B cell (primary cell): ENCODE measurements at regions of chr1 and their contacts with region 1.

Region 1: GRCh38 chr1:108746372-108747205 is at the start of gene STXBP3:
- DNase-seq: peak; percentile 99
- ATAC-seq: peak; percentile 93
- H3K4me3 ChIP-seq: peak within 1 kb of the TSS; percentile 41 to 99 (median 94)
- H3K4me3 Mint-ChIP-seq: peak within 1 kb of the TSS; percentile 98
- H3K27ac ChIP-seq: peak within 1 kb of the TSS; percentile 92 to 94
- H3K27ac Mint-ChIP-seq: peak within 1 kb of the TSS; percentile 100
- H3K4me1 ChIP-seq: peaks cover 4 to 5% of the 10 kb centered on the region in 2 donors
- H3K4me1 Mint-ChIP-seq: peaks cover 33% of the 10 kb centered on the region
- H3K27me3 ChIP-seq: no peaks in the 10 kb centered on the region
- H3K27me3 Mint-ChIP-seq: no peaks in the 10 kb centered on the region
- CTCF ChIP-seq: peak; percentile 94
- total RNA-seq, gene STXBP3: 77.5 and 78.1 TPM in 2 replicates

Region 2: DNA sequence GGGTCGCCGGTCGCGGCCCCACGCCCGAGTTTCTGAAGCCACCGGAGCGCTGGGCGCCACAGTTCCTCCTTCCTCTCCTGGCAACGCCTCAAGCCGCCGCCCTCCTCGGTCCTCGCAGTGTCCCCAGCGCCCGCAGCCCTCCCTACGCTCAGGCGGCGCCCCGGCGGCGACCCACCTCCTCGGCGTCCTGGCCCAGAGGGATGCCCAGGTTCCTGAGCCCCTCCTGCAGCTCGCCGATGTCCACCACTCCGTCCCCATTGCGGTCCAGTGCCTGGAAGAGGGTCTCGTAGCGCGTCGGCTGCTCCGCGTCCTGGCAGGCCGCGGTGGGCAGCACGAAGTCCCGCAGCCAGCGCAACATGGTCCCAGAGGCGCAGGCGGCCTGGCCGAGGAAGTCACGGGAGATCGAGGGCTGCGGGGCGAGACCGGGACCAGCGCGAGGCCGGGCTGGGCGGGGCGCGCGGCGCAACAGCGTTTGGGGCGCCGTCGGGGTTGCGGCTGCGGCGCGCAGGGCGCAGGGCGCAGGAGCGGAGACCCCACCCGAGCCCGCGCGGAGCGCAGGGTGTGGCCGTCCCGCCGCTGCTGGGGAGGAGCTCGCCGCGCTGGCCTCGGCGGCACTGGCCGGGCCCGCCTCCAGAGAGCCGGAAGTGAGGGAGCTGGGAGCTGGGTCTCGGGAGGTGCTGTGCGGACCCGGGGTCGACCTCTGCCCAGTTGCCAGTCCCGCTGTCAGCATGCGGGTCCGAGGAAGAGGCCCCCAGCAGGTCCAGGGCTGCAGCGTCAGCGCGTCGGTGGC is 546.6 kb before region 1 on chr1 and contains the start of gene SLC25A24:
- CTCF ChIA-PET with region 1: no interaction called
- POLR2A ChIA-PET with region 1: no interaction called
- intact Hi-C with region 1: loop called (anchors 5 kb)
- DNase-seq: peak; percentile 85
- ATAC-seq: peak; percentile 95
- H3K4me3 ChIP-seq: peak within 1 kb of the TSS; percentile 85 to 96 (median 87)
- H3K4me3 Mint-ChIP-seq: peak within 1 kb of the TSS; percentile 93
- H3K27ac ChIP-seq: peak within 1 kb of the TSS; percentile 80 to 84
- H3K27ac Mint-ChIP-seq: peak within 1 kb of the TSS; percentile 94
- H3K4me1 ChIP-seq: peaks cover 13 to 16% of the 10 kb centered on the region in 2 donors
- H3K4me1 Mint-ChIP-seq: peaks cover 32% of the 10 kb centered on the region
- H3K27me3 ChIP-seq: no peaks in the 10 kb centered on the region
- H3K27me3 Mint-ChIP-seq: no peaks in the 10 kb centered on the region
- CTCF ChIP-seq: no peak
- total RNA-seq, gene SLC25A24: 25.3 and 25.6 TPM in 2 replicates

Region 3: GRCh38 chr1:108661030-108661620 is 85.5 kb before region 1 on chr1 and contains the start of gene HENMT1:
- CTCF ChIA-PET with region 1: no interaction called
- POLR2A ChIA-PET with region 1: no interaction called
- intact Hi-C with region 1: loop called (anchors 1 kb)
- DNase-seq: peak; percentile 94
- ATAC-seq: peak; percentile 84
- H3K4me3 ChIP-seq: peak within 1 kb of the TSS; percentile 2 to 69 (median 59)
- H3K4me3 Mint-ChIP-seq: peak within 1 kb of the TSS; percentile 88
- H3K27ac ChIP-seq: peak within 1 kb of the TSS; percentile 94 to 95
- H3K27ac Mint-ChIP-seq: peak within 1 kb of the TSS; percentile 96
- H3K4me1 ChIP-seq: peaks cover 8 to 10% of the 10 kb centered on the region in 2 donors
- H3K4me1 Mint-ChIP-seq: peaks cover 12% of the 10 kb centered on the region
- H3K27me3 ChIP-seq: no peaks in the 10 kb centered on the region
- H3K27me3 Mint-ChIP-seq: no peaks in the 10 kb centered on the region
- CTCF ChIP-seq: no peak
- total RNA-seq, gene HENMT1: 6.2 and 6.4 TPM in 2 replicates

Region 4: GRCh38 chr1:108877348-108878159 is 131.0 kb after region 1 on chr1:
- CTCF ChIA-PET with region 1: no interaction called
- POLR2A ChIA-PET with region 1: no interaction called
- intact Hi-C with region 1: loop called (anchors 1 kb)
- DNase-seq: peak; percentile 34
- ATAC-seq: no peak
- H3K4me3 ChIP-seq: peak overlapping the region; percentile 68 to 93 (median 86)
- H3K4me3 Mint-ChIP-seq: peak overlapping the region; percentile 98
- H3K27ac ChIP-seq: peak overlapping the region in 1 of 2 donors; percentile 67
- H3K27ac Mint-ChIP-seq: peak overlapping the region; percentile 88
- H3K4me1 ChIP-seq: peaks cover 11 to 12% of the 10 kb centered on the region in 2 donors
- H3K4me1 Mint-ChIP-seq: peaks cover 13% of the 10 kb centered on the region
- H3K27me3 ChIP-seq: no peaks in the 10 kb centered on the region
- H3K27me3 Mint-ChIP-seq: no peaks in the 10 kb centered on the region
- CTCF ChIP-seq: no peak

Region 5: DNA sequence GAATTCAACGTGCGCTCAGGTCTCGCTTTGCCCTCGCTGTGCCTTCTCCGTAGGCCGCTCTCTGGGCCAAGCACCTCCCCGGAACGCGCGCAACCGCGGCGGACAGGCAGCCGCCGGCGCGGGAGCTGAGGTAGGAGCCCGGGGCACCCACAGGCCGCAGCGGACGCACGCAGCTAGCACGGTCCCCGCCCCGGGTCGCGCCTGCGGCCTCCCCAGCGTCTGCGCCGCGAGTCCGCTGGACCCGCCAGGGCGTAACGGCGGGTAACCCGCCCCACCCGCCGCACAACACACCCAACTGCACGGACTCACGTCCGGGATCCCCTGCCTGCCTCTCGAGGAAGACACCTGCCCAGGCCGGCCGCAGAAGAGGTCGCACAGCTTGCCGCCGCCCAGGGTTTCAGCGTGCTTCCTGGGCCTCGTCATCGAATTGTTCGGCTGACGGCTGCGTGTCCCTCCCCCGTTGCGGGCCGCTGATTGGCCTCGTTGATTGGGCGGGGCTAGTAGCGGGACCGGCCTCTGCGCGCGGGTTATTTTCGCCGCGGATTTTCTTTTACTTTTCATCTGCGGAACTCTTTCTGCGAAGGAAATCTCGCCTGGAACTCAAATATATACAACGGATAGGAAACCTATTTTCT is 216.6 kb after region 1 on chr1 and contains the start of gene CLCC1:
- CTCF ChIA-PET with region 1: no interaction called
- POLR2A ChIA-PET with region 1: no interaction called
- intact Hi-C with region 1: loop called (anchors 5 kb)
- DNase-seq: peak; percentile 97
- ATAC-seq: peak; percentile 91
- H3K4me3 ChIP-seq: peak within 1 kb of the TSS; percentile 56 to 94 (median 76)
- H3K4me3 Mint-ChIP-seq: peak within 1 kb of the TSS; percentile 91
- H3K27ac ChIP-seq: peak within 1 kb of the TSS; percentile 86 to 94
- H3K27ac Mint-ChIP-seq: peak within 1 kb of the TSS; percentile 95
- H3K4me1 ChIP-seq: peaks cover 16 to 17% of the 10 kb centered on the region in 2 donors
- H3K4me1 Mint-ChIP-seq: peaks cover 30% of the 10 kb centered on the region
- H3K27me3 ChIP-seq: no peaks in the 10 kb centered on the region
- H3K27me3 Mint-ChIP-seq: no peaks in the 10 kb centered on the region
- CTCF ChIP-seq: no peak
- total RNA-seq, gene CLCC1: 26.9 and 29.5 TPM in 2 replicates

Region 6: DNA sequence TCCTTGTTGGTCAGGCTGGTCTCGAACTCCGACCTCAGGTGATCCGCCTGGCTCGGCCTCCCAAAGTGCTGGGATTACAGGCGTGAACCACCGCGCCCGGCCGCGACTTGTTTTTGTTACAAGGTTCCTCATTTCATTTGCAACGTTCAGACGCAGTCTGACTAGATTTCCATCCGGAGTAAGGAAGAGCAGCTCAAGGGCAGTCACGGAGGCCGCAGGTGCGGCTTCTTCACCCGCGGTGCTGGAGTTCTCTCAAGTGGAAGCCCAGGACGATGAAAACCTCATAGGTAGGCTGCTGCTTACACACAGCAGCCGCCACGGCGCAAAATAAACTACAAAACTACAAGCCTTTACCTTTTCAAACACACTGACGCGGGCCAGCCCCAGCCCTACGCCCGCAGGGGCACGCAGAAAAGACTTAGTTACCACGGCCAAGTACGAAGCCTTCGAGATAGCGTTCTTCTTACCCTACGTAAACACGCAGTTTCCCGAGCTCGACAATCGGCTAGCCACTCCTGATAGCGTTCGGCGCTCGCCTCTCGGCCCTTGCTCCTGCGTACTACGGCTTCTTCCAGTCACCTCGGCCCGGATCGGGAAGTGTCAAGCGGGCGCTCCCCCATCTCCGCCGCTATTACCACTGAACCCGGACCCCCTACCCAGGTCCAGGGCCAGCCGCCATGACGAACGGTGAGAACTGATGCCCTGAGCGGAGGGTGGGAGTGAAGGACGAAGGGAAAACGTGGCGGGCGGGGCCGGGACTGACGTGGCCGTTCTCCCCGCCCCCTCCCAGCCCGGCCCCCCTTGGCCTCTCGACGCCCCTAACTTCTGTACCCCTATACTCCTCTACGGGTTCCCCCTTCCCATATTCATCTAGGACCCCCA is 343.8 kb after region 1 on chr1 and contains the start of gene TMEM167B:
- CTCF ChIA-PET with region 1: no interaction called
- POLR2A ChIA-PET with region 1: no interaction called
- intact Hi-C with region 1: loop called (anchors 5 kb)
- DNase-seq: peak; percentile 93
- ATAC-seq: peak; percentile 89
- H3K4me3 ChIP-seq: peak within 1 kb of the TSS; percentile 88 to 99 (median 93)
- H3K4me3 Mint-ChIP-seq: peak within 1 kb of the TSS; percentile 92
- H3K27ac ChIP-seq: peak within 1 kb of the TSS; percentile 96 to 98
- H3K27ac Mint-ChIP-seq: peak within 1 kb of the TSS; percentile 94
- H3K4me1 ChIP-seq: peaks cover 25 to 28% of the 10 kb centered on the region in 2 donors
- H3K4me1 Mint-ChIP-seq: peaks cover 33% of the 10 kb centered on the region
- H3K27me3 ChIP-seq: no peaks in the 10 kb centered on the region
- H3K27me3 Mint-ChIP-seq: no peaks in the 10 kb centered on the region
- CTCF ChIP-seq: no peak
- total RNA-seq, gene TMEM167B: 40.9 and 44.5 TPM in 2 replicates

Region 7: GRCh38 chr1:109213785-109214468 is 467.3 kb after region 1 on chr1 and contains the start of gene SARS1:
- CTCF ChIA-PET with region 1: no interaction called
- POLR2A ChIA-PET with region 1: no interaction called
- intact Hi-C with region 1: loop called (anchors 1 kb)
- DNase-seq: peak; percentile 93
- ATAC-seq: peak; percentile 88
- H3K4me3 ChIP-seq: peak within 1 kb of the TSS; percentile 88 to 97 (median 96)
- H3K4me3 Mint-ChIP-seq: peak within 1 kb of the TSS; percentile 100
- H3K27ac ChIP-seq: peak within 1 kb of the TSS; percentile 66 to 73
- H3K27ac Mint-ChIP-seq: peak within 1 kb of the TSS; percentile 98
- H3K4me1 ChIP-seq: peaks cover 22 to 24% of the 10 kb centered on the region in 2 donors
- H3K4me1 Mint-ChIP-seq: peaks cover 35% of the 10 kb centered on the region
- H3K27me3 ChIP-seq: no peaks in the 10 kb centered on the region
- H3K27me3 Mint-ChIP-seq: no peaks in the 10 kb centered on the region
- CTCF ChIP-seq: no peak
- total RNA-seq, gene SARS1: 115 and 119 TPM in 2 replicates

Region 8: GRCh38 chr1:109229531-109230127 is 483.0 kb after region 1 on chr1:
- CTCF ChIA-PET with region 1: no interaction called
- POLR2A ChIA-PET with region 1: no interaction called
- intact Hi-C with region 1: no loop called
- DNase-seq: no peak
- ATAC-seq: no peak
- H3K4me3 ChIP-seq: no peak overlapping the region
- H3K4me3 Mint-ChIP-seq: no peak overlapping the region
- H3K27ac ChIP-seq: no peak overlapping the region
- H3K27ac Mint-ChIP-seq: no peak overlapping the region
- H3K4me1 ChIP-seq: no peaks in the 10 kb centered on the region
- H3K4me1 Mint-ChIP-seq: peaks cover 5% of the 10 kb centered on the region
- H3K27me3 ChIP-seq: no peaks in the 10 kb centered on the region
- H3K27me3 Mint-ChIP-seq: no peaks in the 10 kb centered on the region
- CTCF ChIP-seq: no peak